PC-9 (cell line): ENCODE measurements at regions of chr10 and their contacts with region 1.

Region 1: GRCh38 chr10:12510501-12510941 is 161.2 kb downstream of the CAMK1D start:
- DNase-seq: no peak
- H3K4me3 ChIP-seq: no peak overlapping the region
- H3K27ac ChIP-seq: no peak overlapping the region
- H3K4me1 ChIP-seq: no peaks in the 10 kb centered on the region
- H3K27me3 ChIP-seq: no peaks in the 10 kb centered on the region
- CTCF ChIP-seq: no peak

Region 2: GRCh38 chr10:12193193-12193592 is 317.3 kb before region 1 on chr10:
- CTCF ChIA-PET with region 1: no interaction called
- POLR2A ChIA-PET with region 1: no interaction called
- intact Hi-C with region 1: no loop called
- DNase-seq: peak in 1 of 2 experiments; percentile 57
- H3K4me3 ChIP-seq: no peak overlapping the region
- H3K27ac ChIP-seq: 0 out of 2 replicates have a peak overlapping the region, but pooled peaks have one; percentile 12
- H3K4me1 ChIP-seq: peaks cover 24% of the 10 kb centered on the region
- H3K27me3 ChIP-seq: no peaks in the 10 kb centered on the region
- CTCF ChIP-seq: no peak

Region 3: DNA sequence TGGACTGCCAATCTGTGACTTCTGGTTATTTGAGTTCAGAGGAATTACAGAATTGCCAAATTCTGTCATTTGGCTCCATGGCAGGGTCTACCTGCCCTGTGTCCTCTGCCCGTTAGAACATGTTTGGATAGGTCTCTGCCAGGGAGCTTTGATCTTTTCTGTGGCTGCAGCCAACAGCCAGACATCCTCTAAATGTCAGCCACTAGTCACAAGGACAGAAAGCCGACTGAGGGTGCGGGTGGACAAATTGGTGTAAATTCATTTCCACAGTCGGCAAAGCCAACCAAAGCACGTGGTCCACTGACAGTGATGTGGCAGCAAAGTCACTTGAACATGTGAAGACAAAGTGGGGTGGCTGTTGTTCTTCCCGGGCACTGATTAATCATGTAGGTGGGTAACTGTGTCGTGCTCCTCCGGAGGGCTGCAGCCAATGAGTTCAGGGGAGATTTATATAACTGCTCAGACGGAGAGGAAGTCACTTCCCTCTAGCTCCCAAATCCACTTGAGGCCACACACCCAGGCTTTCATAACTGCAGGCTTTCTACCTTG is 187.9 kb before region 1 on chr10:
- CTCF ChIA-PET with region 1: no interaction called
- POLR2A ChIA-PET with region 1: no interaction called
- intact Hi-C with region 1: no loop called
- DNase-seq: no peak
- H3K4me3 ChIP-seq: no peak overlapping the region
- H3K27ac ChIP-seq: no peak overlapping the region
- H3K4me1 ChIP-seq: peaks cover 22% of the 10 kb centered on the region
- H3K27me3 ChIP-seq: no peaks in the 10 kb centered on the region
- CTCF ChIP-seq: no peak

Region 4: DNA sequence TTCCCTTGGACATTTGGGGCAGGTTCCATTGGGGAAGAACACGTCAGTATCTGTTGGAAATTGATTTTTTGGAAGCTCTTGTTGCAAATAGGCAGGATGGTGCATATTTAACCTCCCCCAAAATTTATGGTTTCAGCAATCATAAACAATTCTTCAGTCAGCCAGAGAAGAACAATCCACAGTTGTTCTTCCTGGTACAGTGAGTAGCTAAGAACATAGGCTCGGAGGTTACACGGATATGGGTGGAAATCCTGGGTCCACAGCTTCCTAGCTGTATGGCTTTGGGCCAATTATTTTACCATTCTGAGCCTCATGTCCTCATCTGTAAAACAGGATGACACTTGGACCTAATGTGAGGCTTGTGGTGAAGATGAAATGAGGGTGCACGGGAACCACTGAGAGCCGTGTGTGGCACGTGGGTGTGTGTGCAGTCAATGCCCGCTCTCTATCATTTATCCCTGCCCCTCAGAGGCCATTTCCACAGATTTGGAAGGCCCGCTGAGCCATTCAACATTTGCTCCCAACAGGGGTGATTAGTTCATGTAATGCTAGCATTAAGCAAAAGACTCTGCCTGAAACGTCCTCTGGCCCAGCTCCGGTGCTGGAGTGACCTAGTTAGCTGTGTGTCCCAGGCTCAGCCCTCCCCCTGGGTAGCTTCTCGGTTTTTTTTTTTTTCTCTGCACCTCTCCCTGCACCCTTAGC is 151.5 kb before region 1 on chr10:
- CTCF ChIA-PET with region 1: no interaction called
- POLR2A ChIA-PET with region 1: no interaction called
- intact Hi-C with region 1: no loop called
- DNase-seq: no peak
- H3K4me3 ChIP-seq: no peak overlapping the region
- H3K27ac ChIP-seq: no peak overlapping the region
- H3K4me1 ChIP-seq: no peaks in the 10 kb centered on the region
- H3K27me3 ChIP-seq: no peaks in the 10 kb centered on the region
- CTCF ChIP-seq: no peak

Region 5: GRCh38 chr10:12479437-12479844 is 31.1 kb before region 1 on chr10:
- CTCF ChIA-PET with region 1: no interaction called
- POLR2A ChIA-PET with region 1: no interaction called
- intact Hi-C with region 1: loop called (anchors 2 kb)
- DNase-seq: no peak
- H3K4me3 ChIP-seq: no peak overlapping the region
- H3K27ac ChIP-seq: no peak overlapping the region
- H3K4me1 ChIP-seq: no peaks in the 10 kb centered on the region
- H3K27me3 ChIP-seq: no peaks in the 10 kb centered on the region
- CTCF ChIP-seq: no peak